Gastrocnemius medialis (tissue), 4 donors: ENCODE measurements at regions of chr1 and their contacts with region 1.

Region 1: GRCh38 chr1:43331688-43332087 is 5.9 kb upstream of the MPL start:
- DNase-seq: no peak
- ATAC-seq: no peak
- H3K4me3 ChIP-seq: no peak overlapping the region
- H3K27ac ChIP-seq: no peak overlapping the region
- H3K4me1 ChIP-seq: peaks cover 0 to 4% of the 10 kb centered on the region in 2 donors
- H3K27me3 ChIP-seq: no peaks in the 10 kb centered on the region
- CTCF ChIP-seq: no peak
- POLR2A ChIP-seq: no peak

Region 2: GRCh38 chr1:43285269-43285990 is 46.3 kb before region 1 on chr1 and contains the start of gene C1orf210:
- in situ Hi-C with region 1: no loop called
- intact Hi-C with region 1: loop called (anchors 1 kb)
- DNase-seq: no peak
- ATAC-seq: no peak
- H3K4me3 ChIP-seq: no peak within 1 kb of the TSS
- H3K27ac ChIP-seq: no peak within 1 kb of the TSS
- H3K4me1 ChIP-seq: no peaks in the 10 kb centered on the region
- H3K27me3 ChIP-seq: peaks cover 0 to 2% (median 0%) of the 10 kb centered on the region in 3 donors
- CTCF ChIP-seq: no peak
- POLR2A ChIP-seq: no peak
- total RNA-seq, gene C1orf210: 0.27 TPM in 1 of 4 donors, not detected in the others

Region 3: DNA sequence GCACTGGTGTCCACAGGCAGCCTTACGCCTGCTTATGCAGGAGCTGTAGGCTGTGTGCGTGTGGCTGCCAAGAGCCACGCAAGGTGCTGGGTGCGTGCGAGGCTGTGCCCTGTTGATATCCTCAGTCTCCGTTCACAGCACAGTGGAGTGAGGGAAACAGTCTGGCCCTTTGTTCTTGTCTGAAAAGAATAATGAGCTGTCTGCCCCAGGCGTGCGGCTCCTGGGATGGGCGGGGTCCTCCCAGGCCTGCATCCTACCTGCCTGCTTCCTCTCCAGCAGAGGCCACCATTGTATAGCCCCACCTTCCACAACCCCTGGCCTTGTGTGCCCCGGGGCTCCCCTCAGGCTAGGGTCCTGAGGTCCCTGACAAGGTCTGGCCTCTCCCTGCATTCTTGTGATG is 271.3 kb after region 1 on chr1:
- in situ Hi-C with region 1: no loop called
- intact Hi-C with region 1: no loop called
- DNase-seq: no peak
- ATAC-seq: no peak
- H3K4me3 ChIP-seq: no peak overlapping the region
- H3K27ac ChIP-seq: no peak overlapping the region
- H3K4me1 ChIP-seq: no peaks in the 10 kb centered on the region
- H3K27me3 ChIP-seq: no peaks in the 10 kb centered on the region
- CTCF ChIP-seq: no peak
- POLR2A ChIP-seq: no peak